Sigmoid colon (tissue), 7 donors: ENCODE measurements at regions of chr1 and their contacts with region 1.

Region 1: GRCh38 chr1:212284744-212285684 is at the start of gene PPP2R5A:
- DNase-seq: peak; percentile 100
- H3K4me3 ChIP-seq: peak within 1 kb of the TSS; percentile 82 to 98 (median 88)
- H3K27ac ChIP-seq: peak within 1 kb of the TSS; percentile 96 to 100 (median 100)
- H3K4me1 ChIP-seq: peaks cover 0 to 38% (median 30%) of the 10 kb centered on the region in 4 donors
- H3K27me3 ChIP-seq: no peaks in the 10 kb centered on the region
- CTCF ChIP-seq: peak in 3 of 4 experiments; percentile 12 to 21 (median 13)
- EP300 ChIP-seq: peak in 2 of 4 donors; percentile 5 to 59
- POLR2A ChIP-seq: peak; percentile 87 to 89
- total RNA-seq, gene PPP2R5A: 25.9 to 47.1 (median 31.4) TPM

Region 2: DNA sequence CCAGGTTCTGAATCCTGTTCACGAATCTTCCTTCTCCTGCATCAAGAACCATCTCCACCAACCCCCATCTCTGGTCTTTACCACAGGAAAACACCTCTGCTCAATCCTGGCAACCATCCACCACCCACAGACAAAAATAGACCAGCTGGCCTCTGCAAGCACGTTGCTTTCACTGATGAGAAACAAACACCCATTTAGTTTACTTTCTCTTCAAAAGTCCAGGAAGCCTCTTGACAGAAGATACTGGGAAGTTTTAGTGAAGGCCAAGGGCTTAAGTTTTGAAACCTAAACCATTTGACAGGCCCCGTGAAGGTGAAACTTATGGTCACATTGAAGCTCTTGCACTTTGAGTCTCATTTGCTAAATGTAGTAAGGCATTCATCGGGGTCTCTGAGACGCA is 122.4 kb before region 1 on chr1:
- intact Hi-C with region 1: loop called (anchors 5 kb)
- DNase-seq: peak; percentile 77
- H3K4me3 ChIP-seq: no peak overlapping the region
- H3K27ac ChIP-seq: peak overlapping the region; percentile 2 to 42 (median 34)
- H3K4me1 ChIP-seq: peaks cover 0 to 32% (median 19%) of the 10 kb centered on the region in 4 donors
- H3K27me3 ChIP-seq: no peaks in the 10 kb centered on the region
- CTCF ChIP-seq: no peak
- EP300 ChIP-seq: no peak
- POLR2A ChIP-seq: no peak

Region 3: GRCh38 chr1:212432706-212433576 is 147.9 kb after region 1 on chr1 and contains the start of gene NENF:
- intact Hi-C with region 1: loop called (anchors 5 kb)
- DNase-seq: peak; percentile 90
- H3K4me3 ChIP-seq: peak within 1 kb of the TSS; percentile 35 to 96 (median 80)
- H3K27ac ChIP-seq: peak within 1 kb of the TSS; percentile 76 to 90 (median 88)
- H3K4me1 ChIP-seq: peaks cover 0 to 18% (median 13%) of the 10 kb centered on the region in 4 donors
- H3K27me3 ChIP-seq: no peaks in the 10 kb centered on the region
- CTCF ChIP-seq: no peak
- EP300 ChIP-seq: no peak
- POLR2A ChIP-seq: no peak
- total RNA-seq, gene NENF: 100 to 136 (median 120) TPM

Region 4: DNA sequence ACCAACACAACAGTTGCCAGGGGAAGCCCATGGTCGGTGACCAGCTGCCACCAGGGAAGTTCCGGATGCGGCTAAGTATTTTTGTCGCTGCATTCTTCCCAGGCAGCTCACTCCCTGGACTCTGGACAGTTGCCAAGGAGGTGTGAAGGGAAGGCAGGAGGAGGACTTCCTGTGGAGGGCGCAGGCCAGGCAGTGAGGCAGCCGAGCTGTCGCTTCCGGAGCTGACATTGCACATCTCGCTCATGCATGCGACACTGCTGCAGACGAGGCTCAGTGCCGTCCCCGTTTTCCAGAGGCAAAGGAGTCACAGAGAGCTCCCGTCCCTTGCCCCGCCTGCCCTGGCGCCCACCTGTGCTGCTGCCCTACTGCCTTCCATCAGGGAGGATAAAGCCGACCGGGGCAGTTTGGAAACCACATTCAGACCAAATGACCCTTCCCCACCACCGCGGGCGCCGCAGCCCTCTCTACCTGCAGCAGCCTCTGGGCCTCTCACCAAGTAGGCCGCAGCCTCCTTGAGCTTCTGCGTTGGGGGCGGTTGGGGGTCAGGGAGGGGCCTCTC is 229.1 kb after region 1 on chr1:
- intact Hi-C with region 1: no loop called
- DNase-seq: peak; percentile 70
- H3K4me3 ChIP-seq: peak overlapping the region in 3 of 4 donors; percentile 14 to 43 (median 41)
- H3K27ac ChIP-seq: peak overlapping the region in 1 of 4 donors; percentile 10
- H3K4me1 ChIP-seq: peaks cover 0 to 26% (median 19%) of the 10 kb centered on the region in 4 donors
- H3K27me3 ChIP-seq: peaks cover 0 to 42% (median 0%) of the 10 kb centered on the region in 3 donors
- CTCF ChIP-seq: no peak
- EP300 ChIP-seq: no peak
- POLR2A ChIP-seq: no peak

Region 5: GRCh38 chr1:212608209-212608955 is 323.4 kb after region 1 on chr1 and contains the start of gene ATF3:
- intact Hi-C with region 1: loop called (anchors 2 kb)
- DNase-seq: peak; percentile 100
- H3K4me3 ChIP-seq: peak within 1 kb of the TSS; percentile 80 to 88 (median 81)
- H3K27ac ChIP-seq: peak within 1 kb of the TSS; percentile 97 to 99 (median 99)
- H3K4me1 ChIP-seq: peaks cover 0 to 54% (median 38%) of the 10 kb centered on the region in 4 donors
- H3K27me3 ChIP-seq: peaks cover 12 to 39% (median 34%) of the 10 kb centered on the region in 3 donors
- CTCF ChIP-seq: no peak
- EP300 ChIP-seq: peak; percentile 24 to 67 (median 40)
- POLR2A ChIP-seq: peak; percentile 98
- total RNA-seq, gene ATF3: 3.2 to 32.0 (median 11.8) TPM

Region 6: GRCh38 chr1:212691561-212692071 is 406.6 kb after region 1 on chr1:
- intact Hi-C with region 1: no loop called
- DNase-seq: no peak
- H3K4me3 ChIP-seq: no peak overlapping the region
- H3K27ac ChIP-seq: no peak overlapping the region
- H3K4me1 ChIP-seq: no peaks in the 10 kb centered on the region
- H3K27me3 ChIP-seq: peaks cover 0 to 29% (median 6%) of the 10 kb centered on the region in 3 donors
- CTCF ChIP-seq: no peak
- EP300 ChIP-seq: no peak
- POLR2A ChIP-seq: no peak